HepG2 (cell line): ENCODE measurements at regions of chrX and their contacts with region 1.

Region 1: DNA sequence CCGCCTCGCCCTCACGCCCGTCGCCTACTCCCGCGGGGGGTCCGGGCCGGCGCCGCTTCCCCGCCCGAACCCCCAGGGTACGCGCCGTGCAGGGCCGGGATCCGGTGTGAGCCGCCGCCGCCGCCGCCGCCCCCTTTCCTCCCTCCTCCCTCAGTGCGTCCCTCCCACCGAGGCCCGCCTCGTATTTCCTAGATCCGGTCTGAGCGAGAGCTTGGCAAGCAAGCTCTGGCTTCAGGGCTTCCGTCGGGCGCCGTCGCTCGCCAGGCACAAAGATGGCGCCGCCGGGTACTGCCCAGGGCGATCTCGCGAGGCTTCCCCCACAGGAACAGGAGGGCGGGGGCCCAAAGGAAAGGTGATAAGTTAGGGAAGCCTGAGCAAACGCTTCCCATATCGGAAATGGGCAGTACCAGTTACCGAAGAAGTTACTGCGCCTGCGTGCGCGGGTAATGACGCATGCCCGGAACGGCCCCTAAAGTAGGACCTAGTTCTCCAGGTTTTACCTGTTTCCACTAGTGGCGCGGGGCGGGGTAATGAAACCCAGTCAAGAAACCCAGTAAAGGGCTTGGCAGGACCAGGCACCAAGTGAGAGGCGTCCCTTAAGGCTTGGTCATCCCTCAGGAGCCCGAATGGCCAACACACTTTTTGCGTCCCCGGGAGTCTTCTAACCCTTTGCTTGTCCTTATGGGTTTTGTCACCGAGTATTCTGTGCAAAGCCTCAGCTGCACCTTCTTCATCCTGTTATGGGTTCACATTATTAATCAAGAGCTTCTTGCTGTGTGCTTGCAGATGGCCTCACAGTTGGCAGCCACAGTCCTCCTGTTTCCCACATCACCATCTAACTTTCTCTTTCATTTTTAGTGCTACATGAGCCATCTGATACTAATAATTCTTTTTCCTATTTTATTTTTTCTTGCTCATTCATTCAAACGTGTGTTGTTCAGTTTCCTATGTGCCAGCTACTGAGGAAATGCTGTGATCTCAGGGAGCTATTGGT is at the start of gene TAB3:
- DNase-seq: peak; percentile 94
- ATAC-seq: peak; percentile 92
- H3K4me3 ChIP-seq: peak within 1 kb of the TSS; percentile 72 to 94 (median 84)
- H3K27ac ChIP-seq: peak within 1 kb of the TSS; percentile 76
- H3K4me1 ChIP-seq: peaks cover 34% of the 10 kb centered on the region
- H3K27me3 ChIP-seq: no peaks in the 10 kb centered on the region
- CTCF ChIP-seq: no peak
- EP300 ChIP-seq: no peak
- POLR2A ChIP-seq: peak; percentile 39 to 58; a peak in 3 of 4 replicates
- RAD21 ChIP-seq: no peak; the same call in 1 of the 2 replicates
- total RNA-seq, gene TAB3: 27.2 and 35.8 TPM in 2 replicates

Region 2: GRCh38 chrX:30851449-30851848 is 38.0 kb before region 1 on chrX:
- CTCF ChIA-PET with region 1: no interaction called
- POLR2A ChIA-PET with region 1: no interaction called
- in situ Hi-C with region 1: no loop called
- intact Hi-C with region 1: no loop called
- DNase-seq: no peak
- ATAC-seq: no peak
- H3K4me3 ChIP-seq: no peak overlapping the region
- H3K27ac ChIP-seq: no peak overlapping the region
- H3K4me1 ChIP-seq: 0 out of 2 replicates have a peak, but pooled peaks cover 6% of the 10 kb centered on the region
- H3K27me3 ChIP-seq: no peaks in the 10 kb centered on the region
- CTCF ChIP-seq: no peak
- EP300 ChIP-seq: no peak
- POLR2A ChIP-seq: no peak
- RAD21 ChIP-seq: no peak

Region 3: DNA sequence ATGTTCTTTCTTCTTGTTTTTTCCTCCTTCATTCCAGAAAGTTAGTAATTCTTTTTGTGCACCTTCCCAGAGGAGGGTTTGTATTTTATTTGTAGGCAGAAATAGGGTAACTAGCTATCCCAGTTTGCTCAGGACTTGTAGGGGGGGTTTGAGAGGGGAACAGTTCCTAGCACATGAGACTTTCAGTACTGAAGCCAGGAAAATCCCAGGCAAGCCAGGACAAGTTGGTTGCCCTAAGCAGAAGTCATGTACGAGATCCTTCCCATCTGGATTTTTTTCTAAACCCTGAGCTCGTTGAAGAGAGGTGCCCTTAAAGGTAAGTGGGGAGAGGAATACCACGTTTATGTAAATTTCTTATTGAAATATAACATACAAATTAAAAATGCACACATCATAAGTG is 15.2 kb after region 1 on chrX:
- CTCF ChIA-PET with region 1: no interaction called
- POLR2A ChIA-PET with region 1: interaction called, 6 read pairs
- in situ Hi-C with region 1: no loop called
- intact Hi-C with region 1: loop called (anchors 1 kb)
- DNase-seq: no peak
- ATAC-seq: peak; percentile 62
- H3K4me3 ChIP-seq: no peak overlapping the region
- H3K27ac ChIP-seq: peak overlapping the region; percentile 84
- H3K4me1 ChIP-seq: peaks cover 49% of the 10 kb centered on the region
- H3K27me3 ChIP-seq: no peaks in the 10 kb centered on the region
- CTCF ChIP-seq: no peak
- EP300 ChIP-seq: no peak
- POLR2A ChIP-seq: no peak
- RAD21 ChIP-seq: no peak

Region 4: DNA sequence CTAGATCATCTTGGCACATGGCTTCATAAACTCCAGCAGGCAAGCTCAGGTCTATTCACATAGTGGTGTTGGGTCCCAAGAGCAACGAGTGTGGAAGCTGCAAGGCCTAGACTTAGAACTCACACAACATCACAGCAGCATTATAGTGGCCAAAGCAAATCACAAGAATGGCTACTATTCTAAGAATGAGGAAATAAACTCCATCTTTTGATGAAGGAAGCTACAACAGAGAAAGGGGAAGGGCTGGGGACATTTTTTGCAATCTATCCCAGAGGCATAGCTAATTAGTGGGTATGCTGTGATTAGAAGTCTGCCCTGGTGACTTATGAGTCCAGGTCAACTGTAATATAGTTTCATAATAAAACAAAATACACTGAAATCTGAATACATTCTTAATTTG is 42.5 kb after region 1 on chrX:
- CTCF ChIA-PET with region 1: no interaction called
- POLR2A ChIA-PET with region 1: interaction called, 7 read pairs
- in situ Hi-C with region 1: no loop called
- intact Hi-C with region 1: loop called (anchors 5 kb)
- DNase-seq: peak; percentile 3
- ATAC-seq: no peak
- H3K4me3 ChIP-seq: no peak overlapping the region
- H3K27ac ChIP-seq: peak overlapping the region; percentile 73
- H3K4me1 ChIP-seq: peaks cover 63% of the 10 kb centered on the region
- H3K27me3 ChIP-seq: no peaks in the 10 kb centered on the region
- CTCF ChIP-seq: no peak
- EP300 ChIP-seq: no peak
- POLR2A ChIP-seq: no peak
- RAD21 ChIP-seq: no peak

Region 5: DNA sequence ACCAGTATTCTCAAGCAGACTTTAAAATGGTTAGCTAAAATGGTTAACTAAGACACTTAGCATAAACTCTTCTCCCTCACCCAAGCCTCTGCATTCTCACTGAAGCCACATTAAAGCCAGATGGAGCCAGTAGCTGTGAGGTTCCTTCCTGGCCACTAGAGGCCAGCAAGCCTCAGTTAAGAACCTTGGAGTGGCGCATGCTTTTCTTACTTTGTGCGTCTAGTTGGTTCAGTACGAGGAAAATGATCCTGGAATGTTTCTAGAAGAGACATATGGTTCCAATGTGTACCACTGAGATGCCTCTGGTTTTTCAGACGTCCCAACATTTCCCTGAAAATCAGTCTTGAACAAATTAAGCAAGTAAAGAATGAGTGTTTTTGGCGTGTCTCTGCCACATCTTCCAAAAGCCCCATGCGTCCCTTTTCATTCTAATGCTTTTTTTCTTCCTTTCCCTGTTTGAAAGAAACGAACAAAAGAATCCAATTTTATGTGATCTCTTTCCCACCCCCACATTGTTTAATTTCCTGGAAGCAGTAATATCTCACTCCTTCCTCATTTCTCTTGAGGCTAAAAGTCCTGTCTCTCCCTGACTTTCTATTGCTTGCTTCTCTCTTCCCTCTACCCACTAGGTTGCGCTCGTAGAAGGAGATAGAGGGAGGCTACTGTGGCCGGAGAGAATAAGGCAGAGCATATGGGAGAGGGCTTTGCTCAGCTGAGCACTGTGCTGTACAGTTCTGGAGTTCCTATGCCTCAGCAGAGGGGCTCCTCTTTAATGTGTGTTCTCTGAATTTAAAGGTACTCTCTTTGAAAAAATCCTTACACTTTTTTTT is 82.5 kb after region 1 on chrX:
- CTCF ChIA-PET with region 1: no interaction called
- POLR2A ChIA-PET with region 1: no interaction called
- in situ Hi-C with region 1: no loop called
- intact Hi-C with region 1: loop called (anchors 10 kb)
- DNase-seq: peak; percentile 53
- ATAC-seq: peak; percentile 93
- H3K4me3 ChIP-seq: peak overlapping the region in 1 of 3 experiments; percentile 31; a peak in 3 of 6 replicates
- H3K27ac ChIP-seq: no peak overlapping the region
- H3K4me1 ChIP-seq: peaks cover 46% of the 10 kb centered on the region
- H3K27me3 ChIP-seq: no peaks in the 10 kb centered on the region
- CTCF ChIP-seq: peak; percentile 78
- EP300 ChIP-seq: no peak
- POLR2A ChIP-seq: no peak
- RAD21 ChIP-seq: peak; percentile 57